Gastrocnemius medialis (tissue), 4 donors: ENCODE measurements at regions of chr5 and their contacts with region 1.

Region 1: DNA sequence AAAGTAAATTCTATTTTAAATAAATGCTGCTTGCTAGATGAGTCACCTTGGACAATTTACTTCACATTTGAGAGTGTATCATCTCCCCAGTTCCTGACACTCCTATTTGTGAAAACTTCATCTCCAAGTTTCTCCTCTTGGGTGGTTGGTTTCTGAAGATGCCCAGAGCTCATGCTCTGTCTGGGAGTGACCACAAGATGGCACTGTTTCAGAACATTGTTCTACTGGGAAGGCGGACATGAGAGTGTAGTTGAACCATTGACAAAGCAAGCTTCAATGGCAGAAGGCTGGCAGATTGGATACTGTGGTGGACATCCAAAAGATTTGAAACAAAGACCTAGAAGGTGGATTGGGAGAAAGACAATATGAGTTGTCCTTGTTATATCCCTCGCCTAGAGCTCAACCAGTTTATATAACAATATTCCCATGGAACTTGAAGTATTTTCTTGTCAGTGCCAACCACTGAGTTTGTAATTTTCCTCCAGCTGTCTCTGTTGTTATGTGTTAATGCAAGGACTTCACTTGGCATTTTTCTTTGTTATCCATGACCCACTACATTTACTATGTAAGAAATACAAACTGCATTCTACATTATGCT is 234.3 kb upstream of the ANKH start:
- DNase-seq: no peak
- ATAC-seq: no peak
- H3K4me3 ChIP-seq: no peak overlapping the region
- H3K27ac ChIP-seq: no peak overlapping the region
- H3K4me1 ChIP-seq: no peaks in the 10 kb centered on the region
- H3K27me3 ChIP-seq: no peaks in the 10 kb centered on the region
- CTCF ChIP-seq: peak; percentile 9 to 60 (median 24)
- POLR2A ChIP-seq: no peak

Region 2: GRCh38 chr5:15834596-15835245 is 728.8 kb after region 1 on chr5:
- in situ Hi-C with region 1: loop called in 1 of 4 experiments (anchors 25 kb)
- intact Hi-C with region 1: no loop called
- DNase-seq: no peak
- ATAC-seq: no peak
- H3K4me3 ChIP-seq: no peak overlapping the region
- H3K27ac ChIP-seq: no peak overlapping the region
- H3K4me1 ChIP-seq: no peaks in the 10 kb centered on the region
- H3K27me3 ChIP-seq: no peaks in the 10 kb centered on the region
- CTCF ChIP-seq: no peak
- POLR2A ChIP-seq: no peak